ENCODE measurements at regions of chr2 and their contacts with region 1.

Region 1: GRCh38 chr2:24456599-24457556 is 34.2 kb upstream of the NCOA1 start:
- DNase-seq: no peak
- ATAC-seq: no peak
- H3K4me3 ChIP-seq: no peak overlapping the region
- H3K4me3 Mint-ChIP-seq: no peak overlapping the region
- H3K27ac ChIP-seq: no peak overlapping the region
- H3K27ac Mint-ChIP-seq: no peak overlapping the region
- H3K4me1 ChIP-seq: peaks cover 19% of the 10 kb centered on the region
- H3K4me1 Mint-ChIP-seq: peaks cover 34 to 36% of the 10 kb centered on the region in 2 donors
- H3K27me3 ChIP-seq: no peaks in the 10 kb centered on the region
- H3K27me3 Mint-ChIP-seq: no peaks in the 10 kb centered on the region
- CTCF ChIP-seq: no peak

Region 2: DNA sequence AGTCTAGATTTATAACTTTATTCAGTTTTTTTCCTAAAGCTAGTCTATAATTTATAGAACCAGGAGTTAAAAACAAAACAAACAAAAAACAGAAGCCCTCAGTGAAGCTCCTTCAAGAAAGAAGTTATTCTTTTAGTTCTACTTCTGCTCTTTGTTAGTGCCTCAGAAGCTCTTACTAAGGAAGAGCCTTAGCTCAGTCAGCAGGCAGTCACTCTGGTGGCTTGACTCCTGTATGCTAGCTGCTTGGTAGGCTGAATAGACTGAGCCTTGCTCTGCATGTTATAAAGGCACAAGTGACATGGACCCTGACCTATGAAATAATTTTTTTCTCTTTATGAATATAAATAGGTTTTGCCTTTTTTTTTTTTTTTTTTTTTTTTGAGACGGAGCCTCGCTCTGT is 59.0 kb after region 1 on chr2:
- intact Hi-C with region 1: loop called (anchors 10 kb)
- DNase-seq: peak in 1 of 2 donors; percentile 25
- ATAC-seq: peak; percentile 41 to 54 (median 49)
- H3K4me3 ChIP-seq: no peak overlapping the region
- H3K4me3 Mint-ChIP-seq: peak overlapping the region; percentile 17
- H3K27ac ChIP-seq: peak overlapping the region; percentile 48
- H3K27ac Mint-ChIP-seq: peak overlapping the region; percentile 74 to 88
- H3K4me1 ChIP-seq: peaks cover 11% of the 10 kb centered on the region
- H3K4me1 Mint-ChIP-seq: peaks cover 72 to 73% of the 10 kb centered on the region in 2 donors
- H3K27me3 ChIP-seq: no peaks in the 10 kb centered on the region
- H3K27me3 Mint-ChIP-seq: no peaks in the 10 kb centered on the region
- CTCF ChIP-seq: no peak

Region 3: GRCh38 chr2:24611626-24612025 is 154.7 kb after region 1 on chr2:
- intact Hi-C with region 1: no loop called
- DNase-seq: no peak
- ATAC-seq: no peak
- H3K4me3 ChIP-seq: no peak overlapping the region
- H3K4me3 Mint-ChIP-seq: no peak overlapping the region
- H3K27ac ChIP-seq: no peak overlapping the region
- H3K27ac Mint-ChIP-seq: peak overlapping the region; percentile 65 to 98
- H3K4me1 ChIP-seq: peaks cover 8% of the 10 kb centered on the region
- H3K4me1 Mint-ChIP-seq: peaks cover 40 to 51% of the 10 kb centered on the region in 2 donors
- H3K27me3 ChIP-seq: no peaks in the 10 kb centered on the region
- H3K27me3 Mint-ChIP-seq: no peaks in the 10 kb centered on the region
- CTCF ChIP-seq: no peak

Measured in natural killer cell (primary cell).